Spleen (tissue), 13 donors: ENCODE measurements at regions of chr19 and their contacts with region 1.

Region 1: DNA sequence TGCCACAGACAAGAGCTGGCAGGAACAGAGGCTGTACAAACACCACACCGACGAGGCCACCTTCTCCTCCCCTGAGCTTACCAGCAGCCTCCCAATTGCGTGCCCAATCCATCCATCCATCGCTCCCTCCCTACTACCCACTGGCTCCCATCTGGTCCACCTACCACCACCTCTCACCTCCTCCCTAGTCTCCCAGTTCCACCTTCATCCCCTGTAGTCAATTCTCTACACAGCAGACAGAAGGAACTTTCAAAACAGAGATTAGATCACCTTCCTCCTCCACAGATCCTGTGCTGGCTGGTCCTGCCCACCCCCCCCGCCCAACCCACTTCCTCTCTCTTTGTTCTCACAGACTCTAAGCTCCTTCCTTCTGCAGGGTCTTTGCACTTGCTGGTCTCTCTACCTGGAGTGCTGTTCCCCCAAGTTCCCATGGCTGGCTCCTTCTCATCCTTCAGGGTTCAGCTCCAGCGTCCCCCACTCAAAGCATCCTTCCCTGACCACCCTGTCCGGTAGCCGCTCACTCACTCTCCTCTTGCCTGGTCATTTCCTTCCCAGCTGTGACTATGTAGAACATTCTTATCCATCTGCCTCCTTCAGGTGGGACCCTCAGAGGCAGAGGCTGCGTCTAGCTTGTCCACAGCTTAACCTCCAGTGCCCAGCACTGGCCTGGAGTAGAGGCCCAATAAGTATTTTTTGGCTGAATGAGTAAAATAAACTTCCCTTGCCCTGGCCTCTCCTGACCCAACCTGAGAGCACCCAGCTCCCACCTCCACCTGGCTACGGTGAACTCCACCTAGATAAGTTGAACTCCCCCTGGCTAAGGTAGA is 23.0 kb downstream of the PIN1 start:
- DNase-seq: peak; percentile 71
- H3K4me3 ChIP-seq: peak overlapping the region in 3 of 8 donors; percentile 3 to 47 (median 6)
- H3K27ac ChIP-seq: peak overlapping the region in 7 of 8 donors; percentile 6 to 86 (median 65)
- H3K4me1 ChIP-seq: peaks cover 0 to 28% (median 15%) of the 10 kb centered on the region in 6 donors
- H3K27me3 ChIP-seq: no peaks in the 10 kb centered on the region
- CTCF ChIP-seq: no peak
- POLR2A ChIP-seq: no peak

Region 2: DNA sequence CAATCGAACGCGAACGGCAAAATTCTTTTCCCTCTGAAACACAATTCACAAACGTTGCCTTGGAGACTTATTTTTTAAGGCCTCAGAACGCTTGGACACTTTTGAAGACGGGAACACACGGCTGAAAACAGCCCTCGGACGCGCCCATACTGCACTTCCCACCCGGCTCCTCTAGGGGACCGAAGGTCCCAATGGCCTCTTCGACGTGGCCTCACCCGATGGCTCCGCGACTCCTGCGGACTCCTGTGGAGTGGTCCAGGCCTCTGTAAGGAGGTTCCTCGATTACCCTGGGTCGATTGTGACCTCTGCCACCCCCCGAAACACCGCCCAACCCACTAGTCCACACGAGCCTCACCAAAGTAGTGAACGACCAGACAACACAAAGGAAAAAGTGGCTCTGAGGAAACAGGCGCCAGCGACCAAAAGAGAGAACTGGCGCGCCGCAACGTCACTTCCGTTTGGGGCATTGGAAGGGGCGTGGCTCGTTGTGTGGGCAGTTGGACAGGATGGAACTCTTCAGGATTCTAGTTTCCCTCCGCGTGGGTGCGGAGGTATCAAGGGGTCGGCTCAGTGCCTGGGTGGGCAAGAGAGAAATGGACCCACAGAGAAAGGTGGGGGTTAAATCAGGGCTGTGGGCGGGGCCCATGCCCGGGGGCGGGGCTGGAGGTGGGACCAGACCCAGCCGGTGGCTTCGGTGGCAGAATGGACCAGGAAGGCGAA is 359.8 kb before region 1 on chr19 and contains the start of gene ZNF560:
- intact Hi-C with region 1: no loop called
- DNase-seq: no peak
- H3K4me3 ChIP-seq: no peak within 1 kb of the TSS
- H3K27ac ChIP-seq: no peak within 1 kb of the TSS
- H3K4me1 ChIP-seq: no peaks in the 10 kb centered on the region
- H3K27me3 ChIP-seq: peaks cover 0 to 27% (median 0%) of the 10 kb centered on the region in 7 donors
- CTCF ChIP-seq: no peak
- POLR2A ChIP-seq: no peak
- total RNA-seq, gene ZNF560: 0.19 TPM in 1 of 7 donors, not detected in the others

Region 3: DNA sequence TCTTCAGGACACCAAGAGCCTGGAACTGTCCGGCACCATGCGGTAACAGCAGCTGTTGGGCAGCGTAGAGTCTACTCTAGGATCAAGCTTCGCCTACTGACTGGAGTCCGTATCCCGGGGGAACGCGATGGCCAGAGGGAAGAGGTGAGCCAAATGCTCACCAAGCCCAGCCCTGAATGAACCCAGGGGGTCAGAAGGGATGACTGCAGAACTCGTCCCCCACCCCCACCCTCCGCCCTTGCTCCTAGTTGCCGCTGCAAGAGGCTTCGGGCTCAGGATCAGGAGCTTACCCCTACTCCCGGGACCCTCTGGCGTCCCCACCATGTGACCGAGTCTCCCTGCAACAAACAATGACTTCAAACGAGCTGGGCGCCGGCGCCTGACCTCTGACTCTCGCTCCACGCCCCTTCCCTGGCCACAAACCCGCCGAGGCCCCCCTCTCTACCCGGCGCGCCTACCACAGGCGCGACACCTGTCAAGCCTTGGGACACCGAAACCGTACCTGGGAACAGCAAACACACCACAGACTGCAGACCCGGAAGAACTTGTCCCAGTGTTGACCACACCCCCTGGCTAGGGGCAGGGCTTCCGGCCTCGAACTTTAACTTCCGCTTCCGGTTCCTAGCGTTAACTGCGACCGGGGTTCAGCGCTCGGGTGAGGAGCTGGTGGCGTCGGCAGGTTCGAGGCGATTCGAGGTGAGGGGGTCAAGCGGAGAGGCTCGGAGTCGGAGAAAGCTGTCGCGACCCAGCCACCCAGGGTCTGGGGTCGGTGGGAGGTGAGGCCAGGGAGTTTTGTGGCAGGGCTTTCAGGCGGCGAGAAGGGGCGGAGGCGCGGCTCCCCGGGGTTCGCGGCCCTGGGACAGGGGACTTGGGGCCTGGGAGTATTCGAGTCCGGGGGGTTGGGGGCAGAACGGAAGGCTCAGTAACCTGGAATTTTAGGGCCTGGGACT is 30.6 kb before region 1 on chr19 and contains the start of gene UBL5:
- intact Hi-C with region 1: no loop called
- DNase-seq: peak; percentile 95
- H3K4me3 ChIP-seq: peak within 1 kb of the TSS; percentile 81 to 98 (median 88)
- H3K27ac ChIP-seq: peak within 1 kb of the TSS; percentile 54 to 90 (median 87)
- H3K4me1 ChIP-seq: peaks cover 20 to 41% (median 32%) of the 10 kb centered on the region in 6 donors
- H3K27me3 ChIP-seq: no peaks in the 10 kb centered on the region
- CTCF ChIP-seq: no peak
- POLR2A ChIP-seq: peak in 1 of 3 donors; percentile 42
- total RNA-seq, gene UBL5: 180 to 286 (median 224) TPM

Region 4: GRCh38 chr19:9914315-9915207 is 56.4 kb after region 1 on chr19:
- intact Hi-C with region 1: loop called (anchors 10 kb)
- DNase-seq: peak; percentile 86
- H3K4me3 ChIP-seq: peak overlapping the region; percentile 28 to 71 (median 40)
- H3K27ac ChIP-seq: peak overlapping the region in 1 of 8 donors; percentile 9
- H3K4me1 ChIP-seq: peaks cover 5 to 23% (median 21%) of the 10 kb centered on the region in 6 donors
- H3K27me3 ChIP-seq: peaks cover 0 to 98% (median 34%) of the 10 kb centered on the region in 7 donors
- CTCF ChIP-seq: peak; percentile 38 to 78 (median 47)
- POLR2A ChIP-seq: no peak

Region 5: GRCh38 chr19:10372690-10373089 is 514.6 kb after region 1 on chr19:
- intact Hi-C with region 1: no loop called
- DNase-seq: no peak
- H3K4me3 ChIP-seq: no peak overlapping the region
- H3K27ac ChIP-seq: peak overlapping the region in 7 of 8 donors; percentile 49 to 87 (median 73)
- H3K4me1 ChIP-seq: peaks cover 0 to 44% (median 16%) of the 10 kb centered on the region in 6 donors
- H3K27me3 ChIP-seq: no peaks in the 10 kb centered on the region
- CTCF ChIP-seq: no peak
- POLR2A ChIP-seq: no peak